Common myeloid progenitor, CD34-positive (primary cell): ENCODE measurements at regions of chr11 and their contacts with region 1.

Region 1: DNA sequence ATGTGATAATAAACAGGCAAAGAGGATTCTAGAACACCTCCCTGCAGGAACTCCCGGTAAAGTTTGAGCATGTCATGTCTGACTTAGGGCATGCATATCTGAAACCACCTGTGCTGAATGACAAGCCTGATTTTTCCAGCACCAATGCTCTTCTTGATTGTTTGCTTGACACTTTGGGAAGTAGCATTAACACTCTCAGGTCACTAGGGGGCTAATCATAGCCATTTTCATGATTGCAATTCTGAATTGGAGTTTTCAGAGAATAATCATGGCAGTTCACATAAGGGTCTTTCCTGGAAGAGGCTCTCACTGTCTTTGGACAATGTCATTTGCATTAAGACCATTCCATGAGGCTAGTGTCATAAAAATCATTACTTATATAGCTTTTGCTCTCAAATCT is 234.4 kb upstream of the MTNR1B start:
- DNase-seq: peak; percentile 28 to 39 (median 39)
- H3K4me3 ChIP-seq: no peak overlapping the region
- H3K27ac ChIP-seq: no peak overlapping the region
- H3K4me1 ChIP-seq: no peaks in the 10 kb centered on the region
- H3K27me3 ChIP-seq: no peaks in the 10 kb centered on the region

Region 2: GRCh38 chr11:92811341-92811740 is 76.3 kb after region 1 on chr11:
- CTCF ChIA-PET with region 1: interaction called, 13 read pairs
- POLR2A ChIA-PET with region 1: no interaction called
- DNase-seq: no peak
- H3K4me3 ChIP-seq: no peak overlapping the region
- H3K27ac ChIP-seq: no peak overlapping the region
- H3K4me1 ChIP-seq: no peaks in the 10 kb centered on the region
- H3K27me3 ChIP-seq: no peaks in the 10 kb centered on the region

Region 3: GRCh38 chr11:92886243-92886905 is 151.3 kb after region 1 on chr11:
- CTCF ChIA-PET with region 1: interaction called, 30 read pairs
- POLR2A ChIA-PET with region 1: no interaction called
- DNase-seq: peak; percentile 63 to 82 (median 75)
- H3K4me3 ChIP-seq: no peak overlapping the region
- H3K27ac ChIP-seq: no peak overlapping the region
- H3K4me1 ChIP-seq: peaks cover 0 to 13% (median 3%) of the 10 kb centered on the region in 4 experiments
- H3K27me3 ChIP-seq: no peaks in the 10 kb centered on the region

Region 4: DNA sequence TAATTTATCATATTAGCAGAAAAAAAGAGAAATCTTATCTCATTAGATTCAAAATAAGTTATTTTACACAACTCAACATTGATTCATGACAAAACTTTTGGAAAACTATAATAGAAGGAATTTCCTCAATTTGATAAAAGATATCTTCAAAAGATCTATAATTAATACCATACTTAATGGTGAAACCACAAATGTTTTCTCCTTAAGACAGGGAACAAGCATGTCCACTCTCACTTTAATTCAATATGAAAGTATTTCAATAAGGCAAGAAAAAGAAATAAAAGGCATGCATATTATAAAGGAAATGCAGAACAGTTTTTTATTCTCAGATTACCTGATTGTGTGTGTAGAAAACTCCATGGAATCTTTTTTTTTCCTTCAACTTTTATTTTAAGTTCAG is 258.0 kb after region 1 on chr11:
- CTCF ChIA-PET with region 1: no interaction called
- POLR2A ChIA-PET with region 1: no interaction called
- DNase-seq: no peak
- H3K4me3 ChIP-seq: no peak overlapping the region
- H3K27ac ChIP-seq: no peak overlapping the region
- H3K4me1 ChIP-seq: no peaks in the 10 kb centered on the region
- H3K27me3 ChIP-seq: no peaks in the 10 kb centered on the region